Endothelial cell of umbilical vein (primary cell): ENCODE measurements at regions of chrX and their contacts with region 1.

Region 1: GRCh38 chrX:72126539-72127140 is 5.1 kb downstream of the RTL5 start:
- DNase-seq: peak; percentile 86
- H3K4me3 ChIP-seq: no peak overlapping the region
- H3K27ac ChIP-seq: no peak overlapping the region
- H3K4me1 ChIP-seq: peaks cover 56% of the 10 kb centered on the region
- H3K27me3 ChIP-seq: no peaks in the 10 kb centered on the region
- CTCF ChIP-seq: peak; percentile 67 to 80
- POLR2A ChIP-seq: no peak

Region 2: GRCh38 chrX:71910986-71911730 is 215.5 kb before region 1 on chrX:
- CTCF ChIA-PET with region 1: interaction called, 3 read pairs
- POLR2A ChIA-PET with region 1: no interaction called
- dilution Hi-C with region 1: no loop called
- intact Hi-C with region 1: loop called (anchors 1 kb)
- DNase-seq: no peak
- H3K4me3 ChIP-seq: peak overlapping the region in 1 of 3 experiments; percentile 12
- H3K27ac ChIP-seq: no peak overlapping the region
- H3K4me1 ChIP-seq: no peaks in the 10 kb centered on the region
- H3K27me3 ChIP-seq: peaks cover 25 to 39% of the 10 kb centered on the region in 2 experiments
- CTCF ChIP-seq: peak in 1 of 2 donors; percentile 26
- POLR2A ChIP-seq: no peak

Region 3: DNA sequence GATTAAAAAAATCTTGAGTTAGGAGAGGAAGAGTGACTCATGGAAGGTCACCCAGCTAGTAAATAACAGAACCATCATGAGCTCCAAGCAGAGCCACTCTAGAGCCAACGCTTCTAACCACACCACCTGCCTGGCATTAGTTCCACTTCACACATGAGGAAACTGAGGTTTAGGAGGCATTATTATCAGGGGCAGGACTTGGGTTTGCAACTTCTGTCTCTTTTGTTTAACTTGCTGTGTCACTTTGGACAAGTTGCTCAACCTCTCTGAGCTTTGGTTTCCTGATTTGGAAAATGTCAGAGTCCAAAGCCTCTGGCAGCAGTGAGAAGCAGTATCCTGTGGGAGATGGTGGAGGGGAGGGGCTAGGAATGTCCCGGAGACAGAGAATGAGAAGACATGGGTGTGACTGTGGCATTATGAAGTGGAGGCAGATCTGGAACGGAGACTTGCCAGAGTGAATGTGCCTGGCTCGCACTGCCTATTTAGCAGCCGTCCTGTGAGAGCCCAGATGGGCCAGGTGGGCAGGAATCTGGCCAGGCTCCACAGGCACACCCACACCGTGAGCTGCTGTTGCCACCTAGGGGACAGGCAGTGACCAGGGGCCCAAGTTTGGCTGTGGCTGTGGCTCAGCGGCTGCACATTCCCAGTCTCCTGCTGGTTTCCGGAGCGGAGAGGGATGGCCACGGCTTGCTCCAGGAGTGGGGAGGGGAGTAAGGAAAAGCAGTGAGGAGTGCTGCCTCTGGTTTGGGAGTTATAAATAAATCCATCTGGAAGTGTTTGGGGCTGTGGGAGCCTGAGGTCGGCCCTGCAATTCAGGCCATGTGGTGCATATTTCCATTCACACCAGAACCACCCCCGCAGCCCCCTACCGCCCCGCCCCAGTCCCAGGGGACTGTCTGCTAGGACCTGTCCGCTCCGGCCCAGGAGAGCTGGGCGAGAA is 122.6 kb before region 1 on chrX:
- CTCF ChIA-PET with region 1: interaction called, 31 read pairs
- POLR2A ChIA-PET with region 1: no interaction called
- dilution Hi-C with region 1: no loop called
- intact Hi-C with region 1: loop called (anchors 1 kb)
- DNase-seq: peak; percentile 45
- H3K4me3 ChIP-seq: no peak overlapping the region
- H3K27ac ChIP-seq: peak overlapping the region; percentile 32
- H3K4me1 ChIP-seq: peaks cover 8% of the 10 kb centered on the region
- H3K27me3 ChIP-seq: peaks cover 0 to 3% of the 10 kb centered on the region in 2 experiments
- CTCF ChIP-seq: no peak
- POLR2A ChIP-seq: no peak

Region 4: GRCh38 chrX:72052415-72053090 is 74.1 kb before region 1 on chrX:
- CTCF ChIA-PET with region 1: interaction called, 3 read pairs
- POLR2A ChIA-PET with region 1: no interaction called
- dilution Hi-C with region 1: no loop called
- intact Hi-C with region 1: loop called (anchors 2 kb)
- DNase-seq: peak; percentile 64
- H3K4me3 ChIP-seq: no peak overlapping the region
- H3K27ac ChIP-seq: peak overlapping the region; percentile 58
- H3K4me1 ChIP-seq: peaks cover 24% of the 10 kb centered on the region
- H3K27me3 ChIP-seq: no peaks in the 10 kb centered on the region
- CTCF ChIP-seq: no peak
- POLR2A ChIP-seq: no peak

Region 5: DNA sequence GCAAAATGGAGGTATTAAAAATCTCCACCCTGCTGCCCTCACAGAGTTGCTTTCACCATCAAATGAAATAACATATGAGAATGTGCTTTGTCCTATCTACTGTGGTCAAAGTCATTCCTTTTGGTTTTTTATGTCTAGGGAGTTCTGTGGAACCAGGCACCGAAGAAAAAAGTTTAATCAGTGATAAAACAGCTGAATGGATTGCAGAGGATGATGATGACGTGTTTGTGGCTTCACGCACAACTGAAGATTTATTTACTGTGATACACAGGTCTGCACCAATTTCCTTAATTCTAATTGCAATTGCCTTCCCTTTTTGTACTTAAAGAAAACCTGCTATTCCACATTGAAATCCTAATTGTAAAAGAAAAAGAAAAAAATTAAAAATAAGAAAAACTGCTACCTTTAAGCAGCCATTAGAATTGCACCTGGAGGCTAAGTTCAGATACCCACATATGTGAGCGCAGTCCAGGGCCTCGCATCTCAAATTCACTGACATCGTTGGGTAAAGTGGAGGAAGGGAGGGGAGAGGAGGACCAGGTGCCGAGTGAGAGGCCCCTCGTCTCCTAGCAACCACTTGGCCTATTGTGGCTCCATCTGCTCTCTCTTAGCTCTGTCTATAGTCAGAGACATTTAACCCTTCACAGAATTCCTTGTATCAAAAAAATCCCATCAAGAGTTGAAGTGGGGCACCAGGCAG is 15.6 kb after region 1 on chrX:
- CTCF ChIA-PET with region 1: no interaction called
- POLR2A ChIA-PET with region 1: no interaction called
- dilution Hi-C with region 1: no loop called
- intact Hi-C with region 1: no loop called
- DNase-seq: no peak
- H3K4me3 ChIP-seq: no peak overlapping the region
- H3K27ac ChIP-seq: no peak overlapping the region
- H3K4me1 ChIP-seq: no peaks in the 10 kb centered on the region
- H3K27me3 ChIP-seq: no peaks in the 10 kb centered on the region
- CTCF ChIP-seq: no peak
- POLR2A ChIP-seq: no peak

Region 6: DNA sequence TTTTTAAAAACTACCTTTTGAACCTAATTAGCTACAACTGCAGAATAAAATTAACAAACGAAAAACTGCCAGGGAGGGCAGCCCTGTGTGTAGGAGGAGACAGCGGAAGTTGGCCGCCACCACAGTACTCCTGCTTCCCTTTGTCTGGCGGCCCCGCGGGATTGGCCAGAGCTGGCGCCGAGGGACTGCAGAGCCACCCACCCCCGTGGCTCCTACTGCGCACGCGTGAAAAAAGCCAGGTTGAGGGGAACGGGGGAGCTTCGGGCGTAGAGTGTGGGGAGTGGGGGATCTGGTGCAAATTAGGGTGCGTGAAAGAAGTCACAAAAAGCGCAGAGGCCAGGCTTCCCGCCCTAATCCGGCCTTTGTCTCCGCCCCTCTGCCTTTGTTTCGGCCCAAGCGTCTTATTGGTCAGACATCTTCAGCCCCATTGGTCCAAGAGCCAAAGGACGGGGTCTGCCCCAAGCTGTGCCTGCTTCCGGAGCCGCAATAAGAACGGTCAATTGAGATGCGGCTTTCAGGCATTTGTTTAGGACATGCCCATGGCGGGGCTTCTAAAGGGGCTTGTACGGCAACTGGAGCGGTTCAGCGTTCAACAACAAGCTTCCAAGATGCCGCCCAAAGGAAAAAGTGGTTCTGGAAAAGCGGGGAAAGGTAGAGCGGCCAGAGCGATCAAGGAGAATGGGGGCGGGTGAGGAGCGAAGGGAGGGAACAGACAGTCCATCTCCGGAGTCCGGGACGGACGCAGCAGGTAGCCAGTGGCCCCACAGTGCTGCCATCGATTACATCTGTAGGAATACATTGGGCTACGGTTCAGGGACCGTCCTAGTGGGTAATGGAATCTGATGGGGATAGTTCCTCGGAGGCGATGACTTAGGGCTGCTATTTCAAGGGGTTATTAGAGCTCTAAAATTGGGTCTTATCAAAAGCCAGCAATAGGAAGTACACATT is 54.8 kb after region 1 on chrX and contains the start of gene PIN4:
- CTCF ChIA-PET with region 1: interaction called, 5 read pairs
- POLR2A ChIA-PET with region 1: no interaction called
- dilution Hi-C with region 1: no loop called
- intact Hi-C with region 1: loop called (anchors 5 kb)
- DNase-seq: peak; percentile 97
- H3K4me3 ChIP-seq: peak within 1 kb of the TSS; percentile 71 to 88 (median 75)
- H3K27ac ChIP-seq: peak within 1 kb of the TSS; percentile 71
- H3K4me1 ChIP-seq: peaks cover 10% of the 10 kb centered on the region
- H3K27me3 ChIP-seq: no peaks in the 10 kb centered on the region
- CTCF ChIP-seq: no peak
- POLR2A ChIP-seq: no peak
- total RNA-seq, gene PIN4: 9.9 and 10.4 TPM in 2 replicates

Region 7: GRCh38 chrX:72245461-72246089 is 118.9 kb after region 1 on chrX:
- CTCF ChIA-PET with region 1: no interaction called
- POLR2A ChIA-PET with region 1: no interaction called
- dilution Hi-C with region 1: no loop called
- intact Hi-C with region 1: no loop called
- DNase-seq: peak; percentile 48
- H3K4me3 ChIP-seq: no peak overlapping the region
- H3K27ac ChIP-seq: no peak overlapping the region
- H3K4me1 ChIP-seq: peaks cover 16% of the 10 kb centered on the region
- H3K27me3 ChIP-seq: no peaks in the 10 kb centered on the region
- CTCF ChIP-seq: peak; percentile 60 to 73
- POLR2A ChIP-seq: no peak

Region 8: DNA sequence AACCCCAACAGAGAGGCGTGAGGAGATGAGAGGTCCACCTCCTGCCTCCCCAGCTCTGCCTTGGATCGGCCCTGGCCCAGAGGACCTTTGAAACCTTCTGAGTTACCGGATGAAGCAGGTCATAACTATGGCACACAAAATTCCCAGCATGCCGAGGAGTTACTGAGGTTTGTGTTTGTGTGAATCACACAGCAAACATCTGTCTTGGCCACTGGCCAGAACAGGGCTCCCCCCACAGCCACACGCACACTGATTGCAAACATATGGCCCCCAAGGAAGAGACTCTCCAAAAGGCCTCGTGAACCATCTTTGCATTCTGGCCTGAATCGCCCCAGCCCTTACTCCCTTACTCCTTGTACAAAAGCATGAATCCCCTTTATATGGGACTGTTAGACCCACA is 131.5 kb after region 1 on chrX:
- CTCF ChIA-PET with region 1: no interaction called
- POLR2A ChIA-PET with region 1: no interaction called
- dilution Hi-C with region 1: no loop called
- intact Hi-C with region 1: no loop called
- DNase-seq: no peak
- H3K4me3 ChIP-seq: no peak overlapping the region
- H3K27ac ChIP-seq: no peak overlapping the region
- H3K4me1 ChIP-seq: peaks cover 6% of the 10 kb centered on the region
- H3K27me3 ChIP-seq: peaks cover 0 to 4% of the 10 kb centered on the region in 2 experiments
- CTCF ChIP-seq: no peak
- POLR2A ChIP-seq: no peak

Region 9: DNA sequence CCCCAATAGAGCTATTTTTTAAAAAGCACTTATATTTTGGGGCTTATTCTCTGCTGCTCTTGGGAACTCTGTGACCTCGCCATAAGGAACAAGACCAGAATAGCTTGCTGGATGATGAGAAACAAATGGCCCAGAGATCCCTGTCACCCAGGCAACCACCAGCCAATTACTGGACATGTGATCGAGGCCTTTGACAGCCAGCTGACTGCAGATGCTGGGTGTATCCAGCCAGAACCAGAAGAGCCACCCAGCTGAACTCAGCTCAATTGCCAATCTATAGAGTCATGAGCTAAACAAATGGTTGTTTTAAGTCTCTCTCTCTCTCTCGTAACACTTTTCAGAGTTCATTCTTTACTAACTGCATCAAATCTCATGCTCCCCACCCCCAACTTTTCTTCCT is 203.5 kb after region 1 on chrX:
- CTCF ChIA-PET with region 1: no interaction called
- POLR2A ChIA-PET with region 1: no interaction called
- dilution Hi-C with region 1: no loop called
- intact Hi-C with region 1: no loop called
- DNase-seq: no peak
- H3K4me3 ChIP-seq: no peak overlapping the region
- H3K27ac ChIP-seq: no peak overlapping the region
- H3K4me1 ChIP-seq: no peaks in the 10 kb centered on the region
- H3K27me3 ChIP-seq: no peaks in the 10 kb centered on the region
- CTCF ChIP-seq: no peak
- POLR2A ChIP-seq: no peak